ENCODE measurements at regions of chr12 and their contacts with region 1.

Region 1: DNA sequence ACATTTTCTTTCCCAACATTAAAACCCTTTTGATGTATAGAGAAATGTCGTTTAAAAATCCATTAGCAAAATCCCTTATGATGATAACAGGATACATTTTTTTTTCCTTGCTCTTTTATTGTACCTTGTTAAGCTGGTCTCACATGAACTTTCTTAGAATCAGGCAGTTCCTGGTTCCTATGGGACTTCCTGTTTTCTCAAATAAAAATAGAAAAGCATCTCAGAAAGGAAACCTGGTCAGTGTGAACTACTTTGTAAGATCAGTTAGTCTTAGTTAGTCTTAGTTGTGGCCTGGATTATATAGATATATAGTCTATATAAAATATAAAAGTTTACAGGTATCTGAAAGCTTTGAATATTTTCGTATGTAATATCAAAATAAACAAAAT is 40.3 kb downstream of the LEMD3 start:
- DNase-seq: no peak
- H3K4me3 Mint-ChIP-seq: peak overlapping the region; percentile 73
- H3K27ac Mint-ChIP-seq: peak overlapping the region; percentile 90
- H3K4me1 Mint-ChIP-seq: peaks cover 41% of the 10 kb centered on the region
- H3K27me3 Mint-ChIP-seq: no peaks in the 10 kb centered on the region

Region 2: GRCh38 chr12:65156366-65156841 is 53.2 kb before region 1 on chr12:
- intact Hi-C with region 1: loop called (anchors 5 kb)
- DNase-seq: no peak
- H3K4me3 Mint-ChIP-seq: peak overlapping the region; percentile 50
- H3K27ac Mint-ChIP-seq: peak overlapping the region; percentile 73
- H3K4me1 Mint-ChIP-seq: peaks cover 17% of the 10 kb centered on the region
- H3K27me3 Mint-ChIP-seq: peaks cover 21% of the 10 kb centered on the region

Region 3: DNA sequence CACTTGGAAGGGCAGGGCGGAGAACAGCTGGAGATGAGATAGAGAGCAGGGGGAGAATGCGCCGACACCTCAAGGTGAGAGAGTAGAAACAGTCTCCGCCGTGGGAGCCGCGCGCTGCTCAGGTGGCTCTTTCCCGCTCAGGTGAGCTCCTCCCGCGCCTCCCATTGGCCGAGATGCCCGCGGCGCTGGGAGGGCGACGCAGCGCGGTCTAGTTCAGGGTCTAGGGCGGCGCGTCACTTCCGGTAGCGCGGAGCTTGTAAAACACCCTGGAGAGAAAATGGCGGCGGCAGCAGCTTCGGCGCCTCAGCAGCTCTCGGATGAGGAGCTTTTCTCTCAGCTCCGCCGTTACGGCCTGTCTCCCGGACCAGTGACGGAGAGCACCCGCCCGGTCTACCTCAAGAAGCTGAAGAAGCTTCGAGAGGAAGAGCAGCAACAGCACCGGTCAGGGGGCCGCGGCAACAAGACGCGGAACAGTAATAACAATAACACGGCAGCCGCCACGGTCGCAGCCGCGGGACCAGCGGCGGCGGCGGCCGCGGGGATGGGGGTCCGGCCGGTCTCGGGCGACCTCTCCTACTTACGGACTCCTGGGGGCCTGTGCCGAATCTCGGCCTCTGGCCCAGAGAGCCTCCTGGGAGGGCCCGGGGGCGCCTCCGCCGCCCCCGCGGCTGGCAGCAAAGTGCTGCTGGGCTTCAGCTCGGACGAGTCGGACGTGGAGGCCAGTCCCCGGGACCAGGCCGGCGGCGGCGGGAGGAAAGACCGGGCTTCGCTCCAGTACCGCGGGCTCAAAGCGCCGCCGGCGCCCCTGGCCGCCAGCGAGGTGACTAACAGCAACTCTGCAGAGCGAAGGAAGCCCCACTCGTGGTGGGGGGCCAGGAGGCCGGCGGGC is 40.1 kb before region 1 on chr12 and contains the start of gene LEMD3:
- intact Hi-C with region 1: loop called (anchors 2 kb)
- DNase-seq: peak; percentile 88
- H3K4me3 Mint-ChIP-seq: peak within 1 kb of the TSS; percentile 99
- H3K27ac Mint-ChIP-seq: peak within 1 kb of the TSS; percentile 99
- H3K4me1 Mint-ChIP-seq: peaks cover 24% of the 10 kb centered on the region
- H3K27me3 Mint-ChIP-seq: peaks cover 2% of the 10 kb centered on the region
- total RNA-seq, gene LEMD3: 26.7 and 29.2 TPM in 2 replicates